Esophagus muscularis mucosa (tissue), 4 donors: ENCODE measurements at regions of chr15 and their contacts with region 1.

Region 1: DNA sequence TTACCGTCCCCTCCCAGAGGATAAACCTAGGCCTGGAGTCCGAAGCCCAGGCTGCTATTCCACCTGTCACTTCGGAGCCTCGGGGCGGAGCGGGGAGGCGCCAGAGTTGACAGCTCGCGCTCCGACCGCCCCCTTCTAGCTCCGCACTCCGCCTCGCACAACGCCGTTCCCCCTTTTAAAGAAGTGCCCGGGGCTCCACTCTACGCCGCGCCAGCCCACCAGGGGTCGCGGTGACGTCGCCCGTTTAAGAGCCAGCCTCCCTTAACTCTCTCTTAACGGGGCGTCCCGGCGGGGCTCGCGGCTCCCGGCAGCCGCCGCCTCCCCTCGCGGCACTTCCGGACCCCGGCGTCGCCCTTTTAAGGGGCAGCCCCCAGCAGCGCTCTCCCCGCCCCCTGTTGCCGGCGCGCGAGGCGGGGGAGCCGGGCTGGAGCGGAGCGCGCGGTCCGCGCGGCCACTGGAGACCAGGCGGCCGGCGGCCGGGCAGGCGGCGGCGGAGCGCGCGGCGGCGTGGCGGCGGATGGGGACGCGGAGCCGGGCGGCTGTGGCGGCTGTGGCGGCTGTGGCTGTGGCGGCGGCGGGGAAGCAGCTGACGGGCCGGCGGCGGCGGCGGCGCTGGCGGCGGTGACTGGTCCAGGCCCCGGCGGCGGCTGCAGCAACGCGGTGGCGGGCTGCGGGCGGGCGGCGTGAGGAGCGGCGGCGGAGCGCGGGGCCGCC is at the start of gene INAFM2:
- DNase-seq: peak; percentile 97
- H3K4me3 ChIP-seq: peak within 1 kb of the TSS; percentile 86 to 95 (median 95)
- H3K27ac ChIP-seq: peak within 1 kb of the TSS; percentile 92 to 98 (median 96)
- H3K4me1 ChIP-seq: peaks cover 40 to 71% (median 64%) of the 10 kb centered on the region in 4 donors
- H3K27me3 ChIP-seq: no peaks in the 10 kb centered on the region
- CTCF ChIP-seq: peak; percentile 60 to 77 (median 72)
- EP300 ChIP-seq: no peak
- POLR2A ChIP-seq: no peak
- total RNA-seq, gene INAFM2: 39.0 to 41.3 (median 40.7) TPM

Region 2: DNA sequence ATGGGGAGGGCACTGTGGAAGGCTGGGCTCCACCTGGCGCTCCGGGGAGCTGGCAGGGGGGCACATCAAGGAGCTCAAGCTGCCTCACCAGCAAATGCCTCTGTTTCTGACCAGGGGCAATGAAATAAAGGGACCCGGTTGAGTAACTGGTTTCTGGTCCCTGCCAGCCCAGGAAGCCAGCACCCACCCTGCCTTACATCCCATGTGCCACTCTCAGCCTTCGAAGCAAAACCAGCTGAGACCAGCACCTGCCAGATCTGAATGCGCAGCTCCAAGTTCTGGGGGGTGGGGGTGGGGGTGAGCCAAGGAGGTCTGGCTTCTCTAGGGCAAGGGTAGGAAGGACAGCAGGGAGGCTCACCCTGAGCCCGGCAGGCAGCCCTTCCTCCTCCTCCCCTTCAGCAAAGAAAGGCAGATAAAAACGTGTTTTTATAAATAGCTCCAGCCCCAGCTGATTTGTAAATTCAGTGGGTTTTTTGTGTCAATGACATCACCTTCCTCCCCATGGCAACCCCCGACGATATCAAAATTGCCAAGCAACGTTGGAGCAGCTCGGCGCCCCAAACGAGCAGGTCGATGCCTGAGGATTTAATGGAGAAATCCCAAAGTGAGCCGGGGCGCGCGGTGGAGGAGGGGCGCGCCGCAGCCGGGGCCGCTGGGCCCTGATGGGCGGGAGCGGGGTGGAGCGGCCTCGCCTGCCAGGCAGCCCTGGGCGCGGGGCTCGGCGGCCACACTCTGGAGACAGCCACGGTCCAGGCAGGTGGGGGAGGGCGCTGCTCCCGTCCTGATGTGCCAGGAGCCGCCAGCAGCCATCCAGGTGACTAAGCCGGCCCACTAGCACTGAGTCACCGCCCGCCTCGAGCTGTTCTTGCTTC is 84.6 kb before region 1 on chr15 and contains the start of gene PAK6:
- intact Hi-C with region 1: no loop called
- DNase-seq: no peak
- H3K4me3 ChIP-seq: peak within 1 kb of the TSS; percentile 35 to 49 (median 40)
- H3K27ac ChIP-seq: no peak within 1 kb of the TSS
- H3K4me1 ChIP-seq: peaks cover 0 to 18% (median 13%) of the 10 kb centered on the region in 4 donors
- H3K27me3 ChIP-seq: peaks cover 0 to 16% (median 0%) of the 10 kb centered on the region in 4 donors
- CTCF ChIP-seq: no peak
- EP300 ChIP-seq: no peak
- POLR2A ChIP-seq: no peak
- total RNA-seq, gene PAK6: 0.33 to 0.52 (median 0.45) TPM in 3 of 4 donors, not detected in the other

Region 3: GRCh38 chr15:40252438-40253166 is 70.8 kb before region 1 on chr15:
- intact Hi-C with region 1: no loop called
- DNase-seq: no peak
- H3K4me3 ChIP-seq: peak overlapping the region; percentile 62 to 73 (median 62)
- H3K27ac ChIP-seq: no peak overlapping the region
- H3K4me1 ChIP-seq: peaks cover 17 to 20% (median 19%) of the 10 kb centered on the region in 4 donors
- H3K27me3 ChIP-seq: peaks cover 0 to 20% (median 4%) of the 10 kb centered on the region in 4 donors
- CTCF ChIP-seq: peak in 1 of 3 experiments; percentile 2
- EP300 ChIP-seq: no peak
- POLR2A ChIP-seq: no peak

Region 4: DNA sequence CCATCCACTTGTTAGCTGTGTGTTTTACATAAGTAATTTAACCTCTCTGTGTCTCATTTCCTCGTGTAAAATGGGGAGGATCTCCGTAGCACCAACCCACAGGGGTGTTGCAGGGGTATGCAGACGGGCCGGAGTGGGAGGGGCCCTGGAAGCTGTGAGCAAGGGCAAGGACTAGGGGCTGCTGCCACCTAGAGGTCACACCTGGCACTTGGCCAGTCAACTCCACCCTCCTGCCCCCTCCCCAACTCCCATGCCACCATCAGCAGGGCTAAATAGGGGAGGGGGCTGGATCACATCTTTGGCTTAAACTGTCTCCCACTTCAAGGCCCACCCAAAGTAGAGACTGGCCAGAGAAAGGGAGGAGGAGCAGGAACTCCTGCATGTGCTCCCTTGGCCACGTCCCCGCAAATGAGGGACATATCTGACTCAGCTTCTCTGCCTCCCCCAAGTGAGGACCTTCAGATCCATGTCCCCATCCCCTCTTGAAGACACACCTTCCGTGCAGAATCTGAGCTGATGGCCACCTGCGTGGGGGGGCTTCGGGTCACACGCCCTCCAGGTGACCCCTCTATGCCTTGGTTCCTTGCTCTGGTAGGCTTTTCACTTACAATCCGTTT is 14.8 kb after region 1 on chr15:
- intact Hi-C with region 1: loop called (anchors 2 kb)
- DNase-seq: no peak
- H3K4me3 ChIP-seq: peak overlapping the region; percentile 56 to 65 (median 64)
- H3K27ac ChIP-seq: peak overlapping the region; percentile 96 to 98 (median 98)
- H3K4me1 ChIP-seq: peaks cover 94 to 100% (median 98%) of the 10 kb centered on the region in 4 donors
- H3K27me3 ChIP-seq: no peaks in the 10 kb centered on the region
- CTCF ChIP-seq: peak; percentile 66 to 79 (median 67)
- EP300 ChIP-seq: no peak
- POLR2A ChIP-seq: no peak

Region 5: DNA sequence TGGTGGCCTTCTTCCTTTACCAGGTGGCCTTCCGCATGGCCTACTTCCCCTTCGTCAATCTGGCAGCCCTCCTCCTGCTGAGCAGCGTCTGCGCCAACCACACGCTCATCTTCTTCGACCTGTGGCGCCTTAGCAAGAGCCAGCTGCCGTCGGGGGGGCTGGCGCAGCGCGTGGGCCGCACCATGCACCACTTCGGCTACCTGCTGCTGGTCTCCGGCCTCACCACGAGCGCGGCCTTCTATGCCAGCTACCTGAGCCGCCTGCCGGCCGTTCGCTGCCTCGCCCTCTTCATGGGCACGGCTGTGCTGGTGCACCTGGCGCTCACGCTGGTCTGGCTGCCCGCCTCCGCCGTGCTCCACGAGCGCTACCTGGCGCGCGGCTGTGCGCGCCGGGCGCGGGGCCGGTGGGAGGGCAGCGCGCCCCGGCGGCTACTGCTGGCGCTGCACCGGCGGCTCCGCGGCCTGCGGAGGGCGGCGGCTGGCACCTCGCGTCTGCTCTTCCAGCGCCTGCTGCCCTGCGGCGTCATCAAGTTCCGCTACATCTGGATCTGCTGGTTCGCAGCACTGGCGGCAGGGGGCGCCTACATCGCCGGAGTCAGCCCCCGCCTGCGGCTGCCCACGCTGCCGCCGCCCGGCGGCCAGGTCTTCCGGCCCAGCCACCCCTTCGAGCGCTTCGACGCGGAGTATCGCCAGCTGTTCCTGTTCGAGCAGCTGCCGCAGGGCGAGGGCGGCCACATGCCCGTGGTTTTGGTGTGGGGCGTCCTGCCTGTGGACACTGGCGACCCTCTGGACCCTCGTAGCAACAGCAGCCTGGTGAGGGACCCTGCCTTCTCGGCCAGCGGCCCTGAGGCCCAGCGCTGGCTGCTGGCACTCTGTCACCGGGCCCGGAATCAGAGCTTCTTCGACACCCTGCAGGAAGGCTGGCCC is 44.6 kb after region 1 on chr15:
- intact Hi-C with region 1: loop called (anchors 5 kb)
- DNase-seq: no peak
- H3K4me3 ChIP-seq: peak overlapping the region; percentile 44 to 54 (median 50)
- H3K27ac ChIP-seq: peak overlapping the region in 2 of 4 donors; percentile 28 to 48
- H3K4me1 ChIP-seq: peaks cover 19 to 25% (median 21%) of the 10 kb centered on the region in 4 donors
- H3K27me3 ChIP-seq: no peaks in the 10 kb centered on the region
- CTCF ChIP-seq: peak; percentile 88 to 94 (median 94)
- EP300 ChIP-seq: no peak
- POLR2A ChIP-seq: no peak